IMR-90 (cell line): ENCODE measurements at regions of chr7 and their contacts with region 1.

Region 1: GRCh38 chr7:82740246-82740848 is 296.8 kb upstream of the CACNA2D1 start:
- DNase-seq: peak; percentile 72
- ATAC-seq: peak; percentile 83
- H3K4me3 ChIP-seq: no peak overlapping the region
- H3K27ac ChIP-seq: no peak overlapping the region
- H3K4me1 ChIP-seq: peaks cover 4% of the 10 kb centered on the region; the same call in 1 of the 2 replicates
- H3K27me3 ChIP-seq: no peaks in the 10 kb centered on the region; the same call in 1 of the 2 replicates
- CTCF ChIP-seq: peak; percentile 78
- POLR2A ChIP-seq: no peak
- RAD21 ChIP-seq: peak; percentile 70

Region 2: GRCh38 chr7:82886324-82886723 is 146.0 kb after region 1 on chr7:
- CTCF ChIA-PET with region 1: no interaction called
- POLR2A ChIA-PET with region 1: no interaction called
- dilution Hi-C with region 1: no loop called
- in situ Hi-C with region 1: no loop called
- intact Hi-C with region 1: no loop called
- DNase-seq: no peak
- ATAC-seq: no peak
- H3K4me3 ChIP-seq: no peak overlapping the region
- H3K27ac ChIP-seq: no peak overlapping the region
- H3K4me1 ChIP-seq: no peaks in the 10 kb centered on the region
- H3K27me3 ChIP-seq: no peaks in the 10 kb centered on the region; the same call in 1 of the 2 replicates
- CTCF ChIP-seq: no peak
- POLR2A ChIP-seq: no peak
- RAD21 ChIP-seq: no peak

Region 3: GRCh38 chr7:82953324-82954027 is 213.1 kb after region 1 on chr7:
- CTCF ChIA-PET with region 1: no interaction called
- POLR2A ChIA-PET with region 1: no interaction called
- dilution Hi-C with region 1: no loop called
- in situ Hi-C with region 1: no loop called
- intact Hi-C with region 1: loop called (anchors 2 kb)
- DNase-seq: no peak
- ATAC-seq: no peak
- H3K4me3 ChIP-seq: no peak overlapping the region
- H3K27ac ChIP-seq: no peak overlapping the region
- H3K4me1 ChIP-seq: no peaks in the 10 kb centered on the region
- H3K27me3 ChIP-seq: no peaks in the 10 kb centered on the region; the same call in 1 of the 2 replicates
- CTCF ChIP-seq: no peak
- POLR2A ChIP-seq: no peak
- RAD21 ChIP-seq: no peak

Region 4: GRCh38 chr7:83271212-83272099 is 531.1 kb after region 1 on chr7:
- CTCF ChIA-PET with region 1: no interaction called
- POLR2A ChIA-PET with region 1: no interaction called
- dilution Hi-C with region 1: no loop called
- in situ Hi-C with region 1: no loop called
- intact Hi-C with region 1: loop called (anchors 5 kb)
- DNase-seq: peak; percentile 19
- ATAC-seq: peak; percentile 74
- H3K4me3 ChIP-seq: no peak overlapping the region
- H3K27ac ChIP-seq: no peak overlapping the region
- H3K4me1 ChIP-seq: no peaks in the 10 kb centered on the region
- H3K27me3 ChIP-seq: no peaks in the 10 kb centered on the region
- CTCF ChIP-seq: peak; percentile 27
- POLR2A ChIP-seq: no peak
- RAD21 ChIP-seq: peak; percentile 31; the same call in 1 of the 2 replicates